Thyroid gland (tissue), 4 donors: ENCODE measurements at regions of chr15 and their contacts with region 1.

Region 1: DNA sequence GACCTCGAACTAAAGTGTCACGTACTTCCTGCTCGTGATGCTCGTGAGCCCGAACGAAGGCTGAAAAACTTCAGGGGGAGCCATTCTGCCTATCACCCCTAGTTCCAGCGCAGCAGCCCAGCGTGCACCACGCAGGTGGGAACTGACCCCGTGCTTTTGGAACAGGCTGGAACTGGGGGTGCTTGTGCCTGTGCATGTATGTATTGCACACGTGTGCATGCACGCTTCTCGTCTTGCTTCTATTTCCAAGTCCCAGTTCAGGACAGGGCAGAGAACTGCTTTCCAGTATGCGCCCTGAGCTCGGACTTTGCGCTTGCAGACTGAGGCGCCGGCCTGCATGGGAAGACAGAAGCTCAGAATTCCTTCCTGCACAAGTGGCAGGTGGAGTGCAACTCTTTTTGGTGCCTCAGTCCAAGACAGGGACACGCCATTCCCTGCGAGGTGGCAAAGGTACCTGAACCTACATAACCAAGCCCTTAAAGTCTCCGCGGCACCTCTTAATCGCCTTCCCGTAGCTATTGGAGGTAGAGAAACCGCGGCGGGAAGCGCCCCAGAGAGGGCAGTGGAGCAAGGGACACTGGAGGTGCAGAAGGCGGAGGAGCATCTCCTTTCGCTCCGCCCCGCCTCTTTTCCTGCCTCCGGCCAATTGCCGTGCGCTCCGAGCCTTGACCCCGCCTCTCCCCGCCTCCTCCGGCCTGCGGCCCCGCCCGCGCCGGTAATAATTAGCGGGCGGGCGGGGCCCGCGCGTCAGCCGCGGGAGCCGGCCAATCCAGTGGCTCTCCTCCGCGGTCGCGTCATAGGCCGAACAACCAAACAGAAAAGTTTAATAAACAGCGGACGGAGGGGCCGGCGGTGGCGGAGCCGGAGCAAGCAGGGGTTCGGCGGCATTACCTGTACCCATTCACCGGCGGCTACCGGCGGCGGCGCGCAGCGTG is at the start of gene ZFAND6:
- DNase-seq: peak; percentile 97
- H3K4me3 ChIP-seq: peak within 1 kb of the TSS; percentile 29 to 86 (median 48)
- H3K27ac ChIP-seq: peak within 1 kb of the TSS; percentile 84 to 97 (median 86)
- H3K4me1 ChIP-seq: peaks cover 4 to 8% of the 10 kb centered on the region in 2 donors
- H3K27me3 ChIP-seq: no peaks in the 10 kb centered on the region
- CTCF ChIP-seq: no peak
- POLR2A ChIP-seq: peak in 1 of 2 donors; percentile 96
- total RNA-seq, gene ZFAND6: 215 to 324 (median 226) TPM

Region 2: GRCh38 chr15:80010131-80010673 is 48.9 kb before region 1 on chr15:
- intact Hi-C with region 1: no loop called
- DNase-seq: peak; percentile 69 to 79
- H3K4me3 ChIP-seq: no peak overlapping the region
- H3K27ac ChIP-seq: peak overlapping the region in 1 of 3 donors; percentile 36
- H3K4me1 ChIP-seq: peaks cover 0 to 9% of the 10 kb centered on the region in 2 donors
- H3K27me3 ChIP-seq: no peaks in the 10 kb centered on the region
- CTCF ChIP-seq: no peak
- POLR2A ChIP-seq: no peak

Region 3: DNA sequence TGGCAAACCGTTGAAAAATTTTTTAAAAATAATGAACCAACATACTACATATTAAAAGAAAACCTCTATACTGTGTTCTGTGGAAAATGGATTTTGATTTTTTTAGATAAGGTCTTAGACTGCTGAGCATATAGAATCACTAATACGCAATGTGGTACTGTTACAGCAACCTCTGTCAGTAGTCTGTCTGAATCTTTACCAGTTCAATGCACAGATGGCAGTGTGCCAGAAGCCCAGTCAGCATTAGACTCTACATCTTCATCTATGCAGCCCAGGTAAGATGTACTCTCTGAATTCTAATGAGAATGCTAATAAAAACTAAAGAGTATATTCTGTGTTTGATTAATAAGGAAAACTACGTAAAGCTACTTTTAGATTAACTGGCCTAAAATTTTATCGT is 62.4 kb after region 1 on chr15:
- intact Hi-C with region 1: no loop called
- DNase-seq: no peak
- H3K4me3 ChIP-seq: no peak overlapping the region
- H3K27ac ChIP-seq: no peak overlapping the region
- H3K4me1 ChIP-seq: peaks cover 0 to 4% of the 10 kb centered on the region in 2 donors
- H3K27me3 ChIP-seq: no peaks in the 10 kb centered on the region
- CTCF ChIP-seq: no peak
- POLR2A ChIP-seq: no peak

Region 4: DNA sequence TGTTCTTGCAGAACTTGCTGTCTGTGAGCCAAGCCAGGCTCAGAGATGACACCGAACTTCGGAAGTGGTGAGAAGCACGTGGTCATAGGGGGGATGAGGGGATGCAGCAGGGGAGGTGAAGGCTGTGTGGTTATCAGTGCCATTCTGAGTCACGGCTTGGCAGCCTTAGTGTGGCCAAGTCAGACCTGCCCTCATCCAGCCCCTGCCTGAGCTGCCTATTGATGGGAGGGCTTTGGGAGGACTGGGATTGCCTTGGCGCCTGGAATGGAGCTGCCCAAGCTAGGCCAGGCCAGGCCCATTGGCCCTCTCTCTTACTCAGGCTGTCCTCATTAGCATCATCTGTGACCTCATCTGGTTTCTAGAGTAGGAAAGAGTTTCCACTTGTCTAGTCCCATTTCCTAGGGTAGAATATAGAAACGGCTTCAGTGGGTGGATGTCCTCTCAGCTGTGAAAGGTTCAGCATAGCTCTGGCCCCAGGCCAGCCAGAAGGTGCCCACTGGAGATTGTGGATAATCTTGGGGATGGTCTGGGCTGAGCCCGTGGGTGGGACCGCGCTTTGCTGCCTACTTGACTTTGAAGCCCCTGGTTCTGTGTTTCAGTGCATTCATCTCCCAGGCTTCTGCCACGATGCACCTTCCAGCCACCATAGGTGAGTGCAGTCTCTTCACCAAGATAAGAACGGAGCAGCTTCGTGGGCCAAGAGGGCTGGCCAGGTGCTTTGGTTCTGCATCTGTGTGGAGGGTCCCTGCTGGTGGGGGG is 100.9 kb after region 1 on chr15:
- intact Hi-C with region 1: loop called (anchors 5 kb)
- DNase-seq: no peak
- H3K4me3 ChIP-seq: no peak overlapping the region
- H3K27ac ChIP-seq: peak overlapping the region; percentile 73 to 80 (median 80)
- H3K4me1 ChIP-seq: peaks cover 7 to 32% of the 10 kb centered on the region in 2 donors
- H3K27me3 ChIP-seq: no peaks in the 10 kb centered on the region
- CTCF ChIP-seq: no peak
- POLR2A ChIP-seq: no peak

Region 5: DNA sequence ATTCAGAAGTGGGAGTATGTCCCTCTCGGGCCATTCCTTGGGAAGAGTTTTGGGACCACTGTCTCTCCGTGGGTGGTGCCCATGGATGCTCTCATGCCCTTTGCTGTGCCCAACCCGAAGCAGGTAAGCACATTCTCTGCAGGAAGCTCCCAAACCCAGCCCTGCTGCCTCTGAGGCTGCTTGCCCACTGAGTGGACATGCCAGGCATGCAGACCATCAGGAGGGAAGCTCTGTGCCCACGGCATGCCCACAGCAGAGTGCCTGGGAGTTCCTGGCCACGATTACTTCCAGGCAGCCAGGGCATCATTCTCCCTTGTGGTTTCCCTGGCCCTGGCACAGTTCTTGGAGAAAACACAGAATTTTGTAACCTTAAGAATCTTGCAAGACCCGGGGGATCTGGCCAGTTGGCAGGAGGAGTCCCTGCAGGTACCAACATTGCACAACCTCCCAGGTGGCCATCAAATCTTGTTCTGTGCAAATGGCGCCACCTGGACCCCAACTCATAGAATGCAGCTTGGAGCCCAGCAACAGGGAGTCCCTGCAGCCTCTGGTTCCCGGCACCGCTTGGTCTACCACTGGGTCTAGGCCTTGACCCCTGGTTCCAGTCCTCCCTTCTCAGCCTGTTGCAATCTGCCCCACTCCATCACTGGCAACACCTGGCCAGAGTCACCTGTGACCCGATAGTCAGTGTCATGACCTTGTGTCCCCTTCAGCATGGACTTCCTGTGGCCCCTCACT is 114.1 kb after region 1 on chr15:
- intact Hi-C with region 1: loop called (anchors 5 kb)
- DNase-seq: peak; percentile 79 to 86
- H3K4me3 ChIP-seq: no peak overlapping the region
- H3K27ac ChIP-seq: no peak overlapping the region
- H3K4me1 ChIP-seq: peaks cover 0 to 4% of the 10 kb centered on the region in 2 donors
- H3K27me3 ChIP-seq: no peaks in the 10 kb centered on the region
- CTCF ChIP-seq: peak; percentile 31 to 78 (median 76)
- POLR2A ChIP-seq: no peak